ENCODE measurements at regions of chr1 and their contacts with region 1.

Region 1: DNA sequence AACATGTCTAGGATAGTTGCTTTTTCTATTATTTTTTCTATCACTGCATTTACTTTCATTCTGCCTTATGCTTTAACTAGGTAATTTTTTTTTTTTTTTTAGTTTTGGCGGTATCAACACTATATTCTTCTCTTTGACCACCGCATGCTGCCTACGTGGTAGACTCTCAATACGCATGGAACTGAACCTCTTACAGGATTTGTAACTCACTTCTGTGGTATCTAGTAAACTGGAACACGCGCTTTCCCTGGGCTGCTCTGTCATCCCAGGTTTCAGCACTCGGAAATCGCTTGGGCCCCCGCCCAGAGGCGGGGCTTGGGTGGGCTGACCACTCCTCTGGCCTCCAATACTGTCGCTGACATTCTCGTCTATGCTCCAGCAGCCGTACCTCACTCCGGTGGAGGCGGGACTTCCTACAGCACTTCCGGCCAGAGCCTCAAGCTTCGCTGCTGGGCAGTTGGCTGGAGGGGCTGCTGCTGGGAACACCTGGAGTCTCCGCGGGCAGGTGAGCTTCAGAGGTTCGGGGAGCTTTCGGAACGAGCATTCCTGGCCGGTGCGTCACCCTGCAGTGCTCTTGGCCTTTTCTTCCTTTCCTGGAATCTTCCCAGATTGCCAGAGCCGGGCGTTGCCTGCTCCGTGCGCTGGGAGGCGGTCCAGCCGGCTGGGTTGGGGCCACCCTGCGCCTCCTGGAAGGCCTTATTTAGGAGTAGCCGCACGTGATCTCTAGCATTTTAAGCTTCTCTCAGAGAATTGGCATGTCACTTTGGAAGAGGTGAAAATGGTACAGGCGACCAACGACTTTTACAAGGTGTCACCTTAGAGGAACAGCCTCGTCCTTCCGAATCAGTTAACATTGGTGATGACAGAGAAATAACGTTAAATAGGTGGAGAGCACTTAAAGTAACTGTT is at the start of gene TBCE:
- DNase-seq: peak; percentile 95
- H3K4me3 Mint-ChIP-seq: peak within 1 kb of the TSS; percentile 97
- H3K27ac Mint-ChIP-seq: peak within 1 kb of the TSS; percentile 76
- H3K4me1 Mint-ChIP-seq: peaks cover 28% of the 10 kb centered on the region
- H3K27me3 Mint-ChIP-seq: no peaks in the 10 kb centered on the region
- total RNA-seq, gene TBCE: 22.7 to 26.3 TPM

Region 2: DNA sequence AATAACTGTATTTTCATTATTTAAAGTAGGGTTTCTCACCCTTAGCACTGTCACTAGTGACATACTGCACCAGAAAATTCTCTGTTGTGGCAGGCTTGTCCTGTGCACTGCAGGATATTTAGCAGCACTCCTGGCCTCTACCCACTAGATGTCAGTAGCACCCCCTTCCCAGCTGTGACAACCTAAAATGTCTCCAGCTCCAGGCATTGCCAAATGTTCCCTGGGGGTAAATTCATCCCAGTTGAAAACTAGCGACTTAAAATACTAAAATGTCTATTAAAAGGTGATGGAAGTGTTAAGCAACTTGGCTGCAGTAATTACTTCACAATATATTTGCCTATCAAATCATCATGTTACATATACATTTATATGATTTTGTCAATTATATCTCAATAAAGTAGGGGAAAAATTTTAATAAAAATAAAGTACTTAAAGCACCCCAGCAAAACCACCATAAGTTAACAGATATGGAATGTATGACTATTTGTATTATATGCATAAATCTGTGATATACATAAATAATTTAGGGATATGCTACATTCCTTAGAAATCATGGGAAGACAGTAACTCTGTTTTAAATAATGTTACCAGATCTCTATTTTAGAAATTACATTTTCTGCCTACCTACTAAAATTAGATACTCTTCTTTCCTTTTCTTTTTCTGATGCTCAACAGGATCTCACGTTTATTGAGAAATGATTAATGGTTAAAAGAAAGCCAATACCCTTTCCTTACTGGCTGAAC is 113.9 kb before region 1 on chr1:
- CTCF ChIA-PET with region 1: no interaction called
- POLR2A ChIA-PET with region 1: no interaction called
- intact Hi-C with region 1: loop called (anchors 1 kb)
- DNase-seq: peak; percentile 75
- H3K4me3 Mint-ChIP-seq: no peak overlapping the region
- H3K27ac Mint-ChIP-seq: no peak overlapping the region
- H3K4me1 Mint-ChIP-seq: peaks cover 24% of the 10 kb centered on the region
- H3K27me3 Mint-ChIP-seq: no peaks in the 10 kb centered on the region

Measured in activated CD4-positive, alpha-beta memory T cell treated with anti-CD3 and anti-CD28 coated beads for 36 hours (primary cell).